ENCODE measurements at regions of chr2 and their contacts with region 1.

Region 1: GRCh38 chr2:64523666-64524603 is at the start of gene AFTPH:
- DNase-seq: peak; percentile 92 to 100 (median 100)
- ATAC-seq: peak; percentile 87 to 92
- H3K4me3 Mint-ChIP-seq: peak within 1 kb of the TSS; percentile 94 to 100 (median 99)
- H3K27ac Mint-ChIP-seq: peak within 1 kb of the TSS; percentile 95 to 99 (median 99)
- H3K4me1 Mint-ChIP-seq: peaks cover 22 to 42% (median 40%) of the 10 kb centered on the region in 4 donors
- H3K27me3 Mint-ChIP-seq: no peaks in the 10 kb centered on the region
- polyA plus RNA-seq, gene AFTPH: 20.9 to 23.6 (median 22.5) TPM

Region 2: GRCh38 chr2:64330281-64331113 is 193.4 kb before region 1 on chr2:
- POLR2A ChIA-PET with region 1: interaction called, 21 read pairs
- DNase-seq: peak; percentile 60 to 89 (median 73)
- ATAC-seq: peak; percentile 22 to 34
- H3K4me3 Mint-ChIP-seq: peak overlapping the region; percentile 31 to 88 (median 68)
- H3K27ac Mint-ChIP-seq: peak overlapping the region in 8 of 10 donors; percentile 57 to 95 (median 74)
- H3K4me1 Mint-ChIP-seq: peaks cover 15 to 42% (median 37%) of the 10 kb centered on the region in 4 donors
- H3K27me3 Mint-ChIP-seq: no peaks in the 10 kb centered on the region

Region 3: DNA sequence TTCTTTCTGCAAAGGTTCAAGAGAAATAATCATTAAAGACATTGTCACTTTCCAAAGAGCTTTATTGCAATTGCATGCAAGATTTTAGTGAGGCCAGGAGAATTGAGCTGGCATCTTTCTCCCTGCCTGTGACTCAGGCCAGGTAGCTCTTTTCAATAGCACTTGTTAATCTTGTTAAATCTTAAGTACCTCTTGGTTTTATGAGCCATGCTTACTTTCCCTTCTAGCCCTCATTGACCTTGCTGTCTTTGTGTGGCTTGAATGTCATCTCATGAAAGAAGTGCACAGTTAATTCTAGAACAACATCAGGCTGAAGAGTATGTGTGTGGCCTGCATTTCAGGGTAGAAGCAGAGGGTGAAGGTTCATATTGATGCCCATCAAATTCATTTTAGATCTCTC is 84.7 kb before region 1 on chr2:
- POLR2A ChIA-PET with region 1: no interaction called
- DNase-seq: no peak
- ATAC-seq: no peak
- H3K4me3 Mint-ChIP-seq: no peak overlapping the region
- H3K27ac Mint-ChIP-seq: no peak overlapping the region
- H3K4me1 Mint-ChIP-seq: no peaks in the 10 kb centered on the region
- H3K27me3 Mint-ChIP-seq: peaks cover 19 to 61% (median 28%) of the 10 kb centered on the region in 5 donors

Region 4: GRCh38 chr2:64548761-64549160 is 24.8 kb after region 1 on chr2:
- POLR2A ChIA-PET with region 1: no interaction called
- DNase-seq: no peak
- ATAC-seq: no peak
- H3K4me3 Mint-ChIP-seq: no peak overlapping the region
- H3K27ac Mint-ChIP-seq: no peak overlapping the region
- H3K4me1 Mint-ChIP-seq: peaks cover 13 to 29% (median 23%) of the 10 kb centered on the region in 4 donors
- H3K27me3 Mint-ChIP-seq: no peaks in the 10 kb centered on the region

Region 5: DNA sequence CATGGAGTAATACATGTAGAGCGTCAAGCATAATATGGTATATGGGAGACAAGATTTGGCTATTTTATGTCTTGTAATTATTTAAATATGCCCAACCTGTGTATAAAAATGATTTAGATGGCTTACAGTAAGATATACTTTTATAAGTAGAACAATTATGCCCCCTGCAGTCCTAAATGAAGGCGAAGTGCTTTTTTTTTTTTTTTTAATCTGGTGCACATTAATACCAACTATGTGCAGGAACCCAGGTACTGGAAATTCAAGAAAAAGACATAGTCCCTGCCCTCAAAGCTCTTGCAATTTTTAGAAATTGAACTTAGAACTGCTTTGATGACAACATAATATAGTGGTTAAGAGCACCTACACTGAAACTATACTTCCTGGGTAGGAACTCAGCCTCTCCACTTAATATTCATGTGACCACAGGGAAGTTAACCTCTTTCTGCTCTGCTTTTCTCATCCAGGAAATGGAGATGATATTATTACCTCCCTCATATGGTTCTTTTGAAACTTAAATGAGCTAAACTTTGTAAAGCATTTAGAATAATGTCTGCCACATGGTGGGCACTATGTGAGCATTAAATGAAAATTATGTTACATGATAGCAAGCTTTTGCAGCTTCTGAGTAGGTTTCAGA is 38.3 kb after region 1 on chr2:
- POLR2A ChIA-PET with region 1: interaction called, 30 read pairs
- DNase-seq: peak in 4 of 10 donors; percentile 7 to 57 (median 52)
- ATAC-seq: peak; percentile 65 to 70
- H3K4me3 Mint-ChIP-seq: no peak overlapping the region
- H3K27ac Mint-ChIP-seq: peak overlapping the region in 1 of 10 donors; percentile 24
- H3K4me1 Mint-ChIP-seq: peaks cover 17 to 35% (median 23%) of the 10 kb centered on the region in 4 donors
- H3K27me3 Mint-ChIP-seq: no peaks in the 10 kb centered on the region

Region 6: GRCh38 chr2:64574871-64575270 is 50.9 kb after region 1 on chr2:
- POLR2A ChIA-PET with region 1: no interaction called
- DNase-seq: no peak
- ATAC-seq: no peak
- H3K4me3 Mint-ChIP-seq: no peak overlapping the region
- H3K27ac Mint-ChIP-seq: peak overlapping the region in 3 of 10 donors; percentile 0 to 56 (median 3)
- H3K4me1 Mint-ChIP-seq: peaks cover 0 to 9% (median 4%) of the 10 kb centered on the region in 4 donors
- H3K27me3 Mint-ChIP-seq: no peaks in the 10 kb centered on the region

Region 7: DNA sequence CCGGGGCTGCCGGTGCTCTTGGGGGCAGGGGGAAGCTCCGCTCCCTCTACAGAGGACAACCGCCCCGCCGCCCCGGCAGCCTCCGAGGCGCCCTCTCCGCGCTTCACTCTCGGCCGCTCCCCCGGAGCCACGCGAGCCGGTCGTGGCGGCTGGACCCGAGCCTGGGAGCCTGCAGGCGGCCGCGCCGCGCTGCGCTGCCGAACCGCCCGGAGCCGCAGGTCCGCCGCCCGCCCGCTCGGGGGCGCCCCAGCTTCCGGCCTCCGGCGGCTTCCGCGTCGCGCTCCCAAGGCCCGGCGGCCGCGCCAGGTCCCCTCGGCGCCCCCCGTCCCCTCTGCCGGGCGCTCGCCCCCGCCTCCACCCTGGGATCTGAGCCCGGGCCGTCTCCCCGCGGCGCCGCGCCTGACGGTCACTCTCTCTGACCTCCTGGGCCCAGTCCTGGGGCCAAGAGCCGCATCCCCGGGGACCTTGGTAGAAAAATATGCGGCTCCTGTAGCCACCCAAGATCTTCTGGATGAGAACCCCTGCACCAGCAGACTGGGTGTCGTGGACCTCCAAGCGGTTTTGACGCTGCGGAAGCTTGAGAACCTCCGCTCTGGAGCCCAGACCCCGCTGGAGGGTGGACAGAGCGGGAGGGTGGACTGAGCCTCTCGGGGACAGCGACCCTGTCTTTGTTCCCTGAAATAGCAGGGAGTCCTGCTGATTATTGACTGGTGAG is 85.4 kb after region 1 on chr2:
- POLR2A ChIA-PET with region 1: interaction called, 13 read pairs
- DNase-seq: peak; percentile 47 to 80 (median 74)
- ATAC-seq: peak; percentile 67 to 84
- H3K4me3 Mint-ChIP-seq: peak overlapping the region; percentile 61 to 89 (median 78)
- H3K27ac Mint-ChIP-seq: peak overlapping the region; percentile 60 to 90 (median 80)
- H3K4me1 Mint-ChIP-seq: peaks cover 4 to 30% (median 25%) of the 10 kb centered on the region in 4 donors
- H3K27me3 Mint-ChIP-seq: no peaks in the 10 kb centered on the region

Region 8: DNA sequence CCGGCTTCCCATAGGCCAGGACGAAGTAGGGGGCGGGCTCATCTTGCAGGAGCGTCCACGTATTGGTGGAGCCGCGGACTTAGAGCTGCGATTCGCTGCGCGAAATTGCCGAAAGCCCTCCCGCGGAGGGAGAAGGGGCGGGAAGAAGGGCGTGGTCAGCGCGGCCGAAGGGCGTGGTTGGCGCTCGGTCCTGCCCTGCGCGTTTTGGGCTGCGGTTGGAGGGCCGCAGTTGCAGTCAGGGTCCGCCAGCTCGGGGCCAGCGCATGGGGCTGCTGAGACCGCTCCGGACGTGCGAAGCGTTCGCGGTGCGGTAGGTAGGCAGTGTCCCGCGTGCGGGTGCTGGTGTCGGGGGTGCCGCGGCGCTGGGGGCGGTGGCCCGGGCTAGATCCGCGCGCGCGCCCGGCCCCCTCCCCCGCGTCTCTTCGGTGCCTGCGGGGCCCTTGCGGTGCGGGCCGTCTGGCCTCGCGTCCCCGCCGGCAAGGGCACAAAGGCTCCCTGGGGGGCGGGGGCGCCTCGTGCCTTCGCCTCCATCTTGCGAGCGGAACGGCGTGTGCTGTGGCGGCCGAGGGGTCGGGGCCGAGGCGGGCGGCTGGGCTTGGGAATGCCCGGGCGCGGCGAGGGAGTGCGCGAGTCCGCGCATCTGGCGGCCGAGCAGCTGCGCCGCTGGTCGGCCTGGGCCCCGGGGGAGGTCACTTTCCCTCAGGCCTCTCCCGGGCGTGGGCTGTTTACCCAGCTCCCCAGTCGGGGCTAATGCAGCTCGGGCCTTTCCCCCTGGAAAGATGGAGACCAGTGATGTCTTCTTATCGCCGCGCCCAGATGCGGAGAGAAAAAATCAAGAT is 532.5 kb after region 1 on chr2 and contains the start of gene CEP68:
- POLR2A ChIA-PET with region 1: interaction called, 10 read pairs
- DNase-seq: peak; percentile 87 to 97 (median 95)
- ATAC-seq: peak; percentile 86 to 87
- H3K4me3 Mint-ChIP-seq: peak within 1 kb of the TSS; percentile 81 to 100 (median 98)
- H3K27ac Mint-ChIP-seq: peak within 1 kb of the TSS; percentile 82 to 99 (median 97)
- H3K4me1 Mint-ChIP-seq: peaks cover 34 to 86% (median 78%) of the 10 kb centered on the region in 4 donors
- H3K27me3 Mint-ChIP-seq: no peaks in the 10 kb centered on the region
- polyA plus RNA-seq, gene CEP68: 26.6 to 39.1 (median 34.7) TPM